ENCODE measurements at regions of chr19 and their contacts with region 1.

Region 1: DNA sequence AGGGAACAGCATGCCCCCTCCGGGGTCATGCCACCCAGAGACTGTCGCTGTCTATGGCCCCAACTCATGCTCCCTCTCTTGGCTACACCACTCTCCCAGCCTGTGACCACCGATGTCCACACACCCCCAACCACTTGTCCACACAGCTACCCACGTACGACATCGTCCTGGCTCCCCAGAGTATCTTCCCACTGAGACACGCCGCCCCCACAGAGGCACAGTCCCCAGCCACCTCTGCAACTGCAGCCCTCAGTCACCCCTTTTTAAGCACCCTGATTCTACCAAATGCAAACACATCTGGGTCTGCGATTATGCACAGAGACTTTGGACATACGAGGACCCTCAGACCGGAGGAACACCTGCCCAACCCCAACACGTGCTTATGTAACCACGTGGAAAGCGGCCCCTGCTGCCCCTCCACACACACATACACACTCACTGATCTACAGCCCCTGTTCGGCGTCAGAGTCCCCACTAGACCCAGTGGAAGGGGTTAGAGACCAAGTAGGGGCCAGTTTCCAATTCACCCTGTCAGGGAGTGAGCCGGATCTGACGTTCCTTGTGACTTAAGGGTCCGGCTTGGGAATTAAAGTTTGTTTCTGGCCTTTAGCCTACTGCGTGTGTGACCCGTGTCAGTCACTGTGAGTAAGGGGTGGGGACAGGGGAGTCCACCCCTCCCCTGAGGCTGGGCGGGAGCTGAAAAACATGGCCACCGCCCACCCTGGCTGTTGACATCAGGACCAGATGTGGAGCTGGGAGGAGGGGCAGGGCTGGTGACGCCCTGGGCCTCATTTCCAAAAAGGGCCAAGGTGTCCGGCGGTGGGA is 11.9 kb upstream of the AXL start:
- DNase-seq: no peak
- H3K4me3 ChIP-seq: no peak overlapping the region
- H3K27ac ChIP-seq: no peak overlapping the region
- H3K4me1 ChIP-seq: no peaks in the 10 kb centered on the region
- H3K27me3 ChIP-seq: no peaks in the 10 kb centered on the region
- CTCF ChIP-seq: no peak

Region 2: DNA sequence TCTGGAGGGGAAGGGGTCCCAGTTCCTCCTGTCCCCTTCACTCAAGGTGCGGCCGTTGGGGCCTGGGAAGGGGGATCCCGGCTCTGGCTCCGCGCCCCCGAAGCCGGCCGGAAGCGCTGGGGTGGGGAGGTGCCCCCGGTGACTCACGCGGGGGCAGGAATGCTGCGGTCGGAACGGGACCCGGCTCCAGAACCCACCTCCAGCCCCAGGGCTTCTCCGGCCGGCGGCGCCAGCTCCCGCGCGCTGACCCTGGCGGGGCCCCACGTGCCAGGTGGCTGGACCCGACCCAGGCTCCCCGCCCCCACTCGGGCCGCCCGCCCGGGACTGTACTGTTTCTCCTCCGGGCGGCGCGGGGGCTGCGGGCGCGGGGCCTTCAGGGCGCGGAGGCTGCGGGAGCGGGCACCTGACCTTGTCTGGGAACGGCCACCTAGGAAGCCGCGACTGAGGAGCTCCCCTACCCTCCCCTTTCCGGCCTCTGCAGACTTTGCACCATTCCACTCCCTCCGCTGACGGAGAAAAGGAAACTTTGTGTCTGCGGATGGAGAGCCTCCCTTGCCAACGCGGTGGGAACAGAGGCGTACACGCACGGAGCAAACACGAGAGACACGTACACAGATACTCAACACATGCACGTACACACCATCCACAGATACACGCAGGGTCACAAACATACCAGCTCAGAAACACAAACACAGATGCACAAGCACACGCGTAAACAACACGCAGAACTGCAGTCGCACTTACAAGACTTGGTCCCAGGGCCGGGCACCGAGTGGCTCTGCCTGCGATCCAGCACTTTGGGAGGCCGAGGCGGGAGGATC is 19.1 kb after region 1 on chr19:
- CTCF ChIA-PET with region 1: interaction called, 16 read pairs
- POLR2A ChIA-PET with region 1: interaction called, 3 read pairs
- intact Hi-C with region 1: no loop called
- DNase-seq: peak; percentile 52
- H3K4me3 ChIP-seq: peak overlapping the region; percentile 48
- H3K27ac ChIP-seq: peak overlapping the region; percentile 46
- H3K4me1 ChIP-seq: peaks cover 6% of the 10 kb centered on the region
- H3K27me3 ChIP-seq: no peaks in the 10 kb centered on the region
- CTCF ChIP-seq: no peak

Region 3: DNA sequence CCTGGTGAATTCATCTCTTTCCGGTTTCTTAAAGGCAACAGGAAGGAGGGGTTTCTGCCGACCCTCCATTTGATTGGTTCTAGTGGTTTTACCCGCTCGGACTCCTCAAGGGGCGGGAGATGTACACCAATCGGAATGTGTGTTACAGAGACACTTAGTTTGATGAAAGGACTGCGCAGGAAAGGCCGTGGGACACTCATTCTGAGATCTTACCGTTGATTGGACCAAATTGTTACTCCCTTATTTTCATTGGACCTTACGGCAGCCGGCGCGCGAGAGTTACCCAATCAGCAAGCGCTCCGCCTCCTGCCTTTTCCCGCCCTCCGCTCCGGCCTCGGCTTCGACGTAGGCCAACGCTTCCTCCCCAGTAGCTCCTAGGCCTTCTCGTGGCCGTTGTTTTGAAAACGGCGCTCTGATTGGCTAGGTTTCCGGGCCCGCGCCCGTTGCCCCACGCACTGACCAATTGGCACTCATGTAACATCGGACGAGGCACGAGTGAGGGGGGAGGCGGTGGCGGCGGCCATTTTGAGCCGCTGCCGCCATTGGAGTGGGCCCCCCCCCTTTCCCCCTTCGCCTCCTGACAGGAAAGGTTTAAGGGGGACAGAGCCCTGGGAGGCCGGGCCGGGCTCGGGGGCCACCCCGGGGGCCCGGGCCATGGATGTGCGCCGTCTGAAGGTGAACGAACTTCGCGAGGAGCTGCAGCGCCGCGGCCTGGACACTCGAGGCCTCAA is 56.9 kb after region 1 on chr19 and contains the start of gene HNRNPUL1:
- CTCF ChIA-PET with region 1: interaction called, 49 read pairs
- POLR2A ChIA-PET with region 1: no interaction called
- intact Hi-C with region 1: loop called (anchors 1 kb)
- DNase-seq: peak; percentile 100
- H3K4me3 ChIP-seq: peak within 1 kb of the TSS; percentile 90
- H3K27ac ChIP-seq: peak within 1 kb of the TSS; percentile 99
- H3K4me1 ChIP-seq: peaks cover 8% of the 10 kb centered on the region
- H3K27me3 ChIP-seq: no peaks in the 10 kb centered on the region
- CTCF ChIP-seq: 0 out of 2 replicates have a peak, but pooled peaks have one; percentile 34
- total RNA-seq, gene HNRNPUL1: 342 and 344 TPM in 2 replicates

Region 4: DNA sequence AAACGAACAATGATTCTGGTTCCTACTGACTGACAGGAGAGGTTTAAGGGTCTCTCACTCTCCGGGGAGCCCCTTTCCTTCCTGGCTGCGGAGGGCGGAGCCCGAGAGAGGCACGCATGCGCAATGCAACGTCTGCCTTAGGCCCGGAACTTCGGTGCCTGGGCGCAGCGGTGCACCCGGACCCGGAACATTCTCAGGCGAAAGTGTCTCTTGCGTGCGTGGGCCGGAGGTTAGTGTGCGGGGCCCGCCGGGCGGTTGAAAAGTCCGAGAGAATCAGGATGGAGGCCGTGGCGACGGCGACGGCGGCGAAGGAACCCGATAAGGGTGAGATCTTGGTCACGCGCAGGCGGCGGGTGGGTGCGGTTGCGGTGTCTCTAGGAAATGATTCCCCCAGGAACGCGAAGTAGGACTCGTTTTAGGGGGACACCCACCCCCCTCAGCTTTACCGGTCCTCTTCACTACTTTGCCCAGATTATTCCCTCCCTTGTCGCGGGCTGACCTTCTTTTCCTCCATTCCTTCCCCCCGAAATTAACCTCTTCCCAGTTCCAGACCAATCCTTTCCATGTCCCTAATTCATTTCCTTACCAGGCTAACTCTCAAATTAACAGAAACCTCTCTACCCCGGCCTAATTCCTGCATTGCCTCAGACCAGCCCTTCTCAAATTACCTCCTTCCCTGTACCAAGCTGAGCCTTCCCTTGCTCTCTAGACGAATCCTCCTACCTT is 103.1 kb after region 1 on chr19 and contains the start of gene CCDC97:
- CTCF ChIA-PET with region 1: interaction called, 10 read pairs
- POLR2A ChIA-PET with region 1: no interaction called
- intact Hi-C with region 1: loop called (anchors 2 kb)
- DNase-seq: peak; percentile 92
- H3K4me3 ChIP-seq: peak within 1 kb of the TSS; percentile 78
- H3K27ac ChIP-seq: peak within 1 kb of the TSS; percentile 96
- H3K4me1 ChIP-seq: peaks cover 12% of the 10 kb centered on the region
- H3K27me3 ChIP-seq: no peaks in the 10 kb centered on the region
- CTCF ChIP-seq: no peak
- total RNA-seq, gene CCDC97: 40.8 and 41.8 TPM in 2 replicates

Region 5: GRCh38 chr19:41671491-41671890 is 464.4 kb after region 1 on chr19:
- CTCF ChIA-PET with region 1: interaction called, 10 read pairs
- POLR2A ChIA-PET with region 1: no interaction called
- intact Hi-C with region 1: no loop called
- DNase-seq: no peak
- H3K4me3 ChIP-seq: no peak overlapping the region
- H3K27ac ChIP-seq: no peak overlapping the region
- H3K4me1 ChIP-seq: no peaks in the 10 kb centered on the region
- H3K27me3 ChIP-seq: peaks cover 34% of the 10 kb centered on the region
- CTCF ChIP-seq: no peak